AG04450 (cell line): ENCODE measurements at regions of chr1 and their contacts with region 1.

Region 1: GRCh38 chr1:117093870-117094621 is 27.5 kb downstream of the TRIM45 start:
- DNase-seq: no peak
- H3K4me3 ChIP-seq: no peak overlapping the region
- H3K27ac ChIP-seq: peak overlapping the region; percentile 90
- H3K27me3 ChIP-seq: no peaks in the 10 kb centered on the region
- CTCF ChIP-seq: peak; percentile 29; the same call in 1 of the 2 replicates

Region 2: GRCh38 chr1:117077267-117077666 is 16.8 kb before region 1 on chr1:
- CTCF ChIA-PET with region 1: interaction called, 5 read pairs
- POLR2A ChIA-PET with region 1: interaction called, 11 read pairs
- DNase-seq: no peak
- H3K4me3 ChIP-seq: no peak overlapping the region
- H3K27ac ChIP-seq: peak overlapping the region; percentile 74
- H3K27me3 ChIP-seq: no peaks in the 10 kb centered on the region
- CTCF ChIP-seq: no peak

Region 3: DNA sequence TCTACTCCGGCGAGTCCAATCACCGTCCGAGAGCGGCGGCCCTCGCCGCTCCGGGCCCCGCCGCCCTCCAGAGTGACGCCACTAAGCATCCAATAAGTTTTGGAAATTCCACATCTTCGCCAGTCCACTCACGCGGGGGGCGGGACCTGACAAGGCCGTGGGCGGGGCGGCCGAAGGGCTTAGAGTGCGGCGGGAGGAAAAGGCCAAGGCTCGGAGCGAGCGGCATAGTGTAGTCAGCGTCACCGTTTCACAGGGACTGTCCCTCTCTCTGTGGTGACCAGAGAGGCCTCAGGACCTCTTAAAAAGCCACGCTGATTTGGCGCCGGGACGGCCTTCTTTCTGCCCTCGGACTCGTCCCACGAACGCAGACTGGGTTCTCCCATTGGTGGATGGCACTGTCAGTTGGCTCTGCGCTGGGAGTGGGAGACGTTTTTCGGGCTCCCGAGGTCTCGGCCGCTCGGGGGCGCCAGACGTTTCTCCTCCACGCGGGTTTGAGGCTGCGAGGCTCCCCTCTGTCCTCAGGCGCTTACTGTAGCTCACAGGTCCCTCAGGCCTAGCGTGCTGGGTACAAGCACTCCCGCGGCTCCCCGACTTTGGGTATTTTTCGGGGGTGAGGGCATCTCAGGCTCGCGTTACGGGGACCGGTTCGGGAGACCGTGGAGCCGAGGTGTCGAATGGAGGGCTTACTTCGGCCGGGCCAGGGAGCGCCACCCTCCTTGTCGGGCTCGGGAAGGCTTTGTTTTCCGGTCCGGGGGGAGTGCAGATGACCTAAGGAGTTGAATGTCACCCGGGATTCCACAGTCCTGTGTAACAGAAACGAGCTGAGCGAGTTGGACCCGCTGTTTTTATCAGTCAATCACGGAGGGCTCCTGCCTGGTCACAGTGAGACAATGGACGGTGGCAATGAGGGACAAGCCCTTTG is 28.0 kb after region 1 on chr1:
- CTCF ChIA-PET with region 1: interaction called, 51 read pairs
- POLR2A ChIA-PET with region 1: no interaction called
- DNase-seq: peak; percentile 88
- H3K4me3 ChIP-seq: peak overlapping the region; percentile 87
- H3K27ac ChIP-seq: peak overlapping the region; percentile 91
- H3K27me3 ChIP-seq: peaks cover 10% of the 10 kb centered on the region
- CTCF ChIP-seq: peak; percentile 84